ENCODE measurements at regions of chrX and their contacts with region 1.

Region 1: GRCh38 chrX:130060122-130061069 is 49.9 kb downstream of the ELF4 start:
- DNase-seq: peak in 1 of 2 donors; percentile 86
- H3K4me3 ChIP-seq: peak overlapping the region; percentile 48 to 65
- H3K27ac ChIP-seq: peak overlapping the region; percentile 68 to 77
- H3K4me1 ChIP-seq: peaks cover 0 to 2% of the 10 kb centered on the region in 2 donors
- H3K27me3 ChIP-seq: no peaks in the 10 kb centered on the region
- CTCF ChIP-seq: peak; percentile 84 to 89 (median 88)

Region 2: DNA sequence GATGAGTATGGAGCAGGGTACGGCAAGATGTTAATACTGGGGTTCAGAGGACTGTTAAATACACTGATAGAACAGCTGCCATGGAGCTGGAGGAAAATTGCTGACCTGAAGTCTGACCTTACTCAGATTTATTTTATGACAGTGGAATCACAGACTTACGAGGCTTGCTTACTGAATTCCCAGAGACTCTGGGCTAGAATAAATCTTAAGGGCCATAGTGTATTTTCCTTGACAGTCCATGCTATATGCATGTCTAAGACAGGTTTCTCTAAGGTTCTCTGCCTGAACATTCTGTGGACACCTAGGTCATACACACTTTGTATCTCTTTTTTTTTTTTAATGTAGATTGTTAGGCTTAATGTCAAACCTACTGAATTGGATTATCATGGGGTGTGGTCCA is 1375.0 kb before region 1 on chrX:
- intact Hi-C with region 1: no loop called
- DNase-seq: no peak
- H3K4me3 ChIP-seq: no peak overlapping the region
- H3K27ac ChIP-seq: no peak overlapping the region
- H3K4me1 ChIP-seq: no peaks in the 10 kb centered on the region
- H3K27me3 ChIP-seq: no peaks in the 10 kb centered on the region
- CTCF ChIP-seq: no peak

Region 3: GRCh38 chrX:129606918-129607317 is 453.5 kb before region 1 on chrX:
- intact Hi-C with region 1: loop called (anchors 1 kb)
- DNase-seq: peak in 1 of 2 donors; percentile 70
- H3K4me3 ChIP-seq: no peak overlapping the region
- H3K27ac ChIP-seq: no peak overlapping the region
- H3K4me1 ChIP-seq: no peaks in the 10 kb centered on the region
- H3K27me3 ChIP-seq: no peaks in the 10 kb centered on the region
- CTCF ChIP-seq: peak; percentile 75 to 80 (median 77)

Region 4: GRCh38 chrX:129843459-129844306 is 216.7 kb before region 1 on chrX and contains the start of gene ZDHHC9:
- intact Hi-C with region 1: loop called (anchors 5 kb)
- DNase-seq: peak; percentile 59 to 93
- H3K4me3 ChIP-seq: peak within 1 kb of the TSS; percentile 54 to 77
- H3K27ac ChIP-seq: peak within 1 kb of the TSS; percentile 68 to 77
- H3K4me1 ChIP-seq: no peaks in the 10 kb centered on the region
- H3K27me3 ChIP-seq: no peaks in the 10 kb centered on the region
- CTCF ChIP-seq: no peak
- total RNA-seq, gene ZDHHC9: 43.0 TPM

Region 5: DNA sequence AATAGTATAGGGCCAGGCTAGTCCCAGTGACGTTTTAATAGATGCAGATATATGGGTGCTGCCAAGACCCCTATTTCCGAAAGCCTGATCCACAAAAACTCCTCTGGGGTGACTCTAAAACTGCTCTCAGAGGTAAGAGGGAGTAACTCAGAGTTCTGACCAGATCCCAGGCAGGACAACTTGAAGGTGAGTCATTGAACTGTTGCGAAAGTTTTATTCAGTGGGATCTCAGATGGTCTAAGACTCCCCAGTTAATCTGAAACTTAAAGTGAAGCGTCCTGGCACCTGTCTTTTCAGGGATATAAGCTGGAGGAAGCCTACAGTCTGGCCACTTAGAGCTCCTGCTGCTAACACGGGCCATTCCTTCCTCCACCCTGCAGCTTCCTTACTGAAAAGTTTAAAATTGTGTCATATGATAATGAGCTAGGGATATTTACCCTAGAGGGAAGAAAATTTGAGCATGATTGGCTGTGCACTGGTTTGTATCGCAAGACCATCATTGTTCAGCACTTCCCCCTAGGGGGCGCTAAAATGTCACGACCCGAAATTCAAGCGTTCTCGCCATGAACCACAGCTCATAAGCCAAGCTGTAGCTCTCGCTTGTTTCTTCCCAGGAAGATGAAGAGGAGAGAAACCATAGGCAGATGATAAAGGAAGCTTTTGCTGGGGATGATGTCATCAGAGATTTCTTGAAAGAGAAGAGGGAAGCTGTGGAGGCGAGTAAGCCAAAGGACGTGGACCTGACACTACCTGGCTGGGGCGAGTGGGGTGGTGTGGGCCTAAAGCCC is 134.9 kb before region 1 on chrX:
- intact Hi-C with region 1: loop called (anchors 1 kb)
- DNase-seq: peak in 1 of 2 donors; percentile 79
- H3K4me3 ChIP-seq: no peak overlapping the region
- H3K27ac ChIP-seq: no peak overlapping the region
- H3K4me1 ChIP-seq: no peaks in the 10 kb centered on the region
- H3K27me3 ChIP-seq: no peaks in the 10 kb centered on the region
- CTCF ChIP-seq: peak; percentile 36 to 65 (median 53)

Region 6: DNA sequence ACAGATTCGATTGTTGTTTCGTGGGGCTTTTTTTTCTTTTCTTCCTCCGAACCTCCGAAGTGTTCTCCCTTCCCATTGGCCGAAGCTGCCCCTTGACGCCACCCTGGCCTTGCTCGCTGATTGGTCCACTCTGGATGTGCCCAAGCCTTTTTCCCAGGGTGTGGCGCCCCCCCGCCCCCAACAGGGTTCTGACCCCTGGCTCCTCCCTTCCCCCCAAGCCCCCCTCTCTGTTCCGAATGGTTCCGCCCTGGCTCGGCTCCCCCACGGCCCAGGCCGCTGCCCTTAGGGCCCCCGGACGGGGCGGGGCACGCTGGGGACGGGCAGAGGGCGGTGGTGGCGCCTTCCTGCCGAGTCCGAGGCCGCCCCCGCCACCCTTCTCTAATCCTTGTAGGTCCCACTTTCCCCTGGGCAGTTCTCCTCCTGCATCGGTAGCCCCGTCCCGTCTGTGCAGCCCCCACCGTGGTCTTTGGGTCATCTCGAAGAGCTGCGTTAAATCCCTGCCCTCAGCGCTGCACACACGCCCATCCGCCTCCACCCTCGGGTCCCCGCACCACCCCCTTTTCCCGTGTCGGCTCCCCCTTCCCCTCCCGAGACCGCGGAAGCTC is 128.9 kb before region 1 on chrX:
- intact Hi-C with region 1: loop called (anchors 1 kb)
- DNase-seq: peak; percentile 60 to 94
- H3K4me3 ChIP-seq: peak overlapping the region; percentile 43 to 76
- H3K27ac ChIP-seq: peak overlapping the region; percentile 83 to 86
- H3K4me1 ChIP-seq: no peaks in the 10 kb centered on the region
- H3K27me3 ChIP-seq: no peaks in the 10 kb centered on the region
- CTCF ChIP-seq: no peak

Region 7: DNA sequence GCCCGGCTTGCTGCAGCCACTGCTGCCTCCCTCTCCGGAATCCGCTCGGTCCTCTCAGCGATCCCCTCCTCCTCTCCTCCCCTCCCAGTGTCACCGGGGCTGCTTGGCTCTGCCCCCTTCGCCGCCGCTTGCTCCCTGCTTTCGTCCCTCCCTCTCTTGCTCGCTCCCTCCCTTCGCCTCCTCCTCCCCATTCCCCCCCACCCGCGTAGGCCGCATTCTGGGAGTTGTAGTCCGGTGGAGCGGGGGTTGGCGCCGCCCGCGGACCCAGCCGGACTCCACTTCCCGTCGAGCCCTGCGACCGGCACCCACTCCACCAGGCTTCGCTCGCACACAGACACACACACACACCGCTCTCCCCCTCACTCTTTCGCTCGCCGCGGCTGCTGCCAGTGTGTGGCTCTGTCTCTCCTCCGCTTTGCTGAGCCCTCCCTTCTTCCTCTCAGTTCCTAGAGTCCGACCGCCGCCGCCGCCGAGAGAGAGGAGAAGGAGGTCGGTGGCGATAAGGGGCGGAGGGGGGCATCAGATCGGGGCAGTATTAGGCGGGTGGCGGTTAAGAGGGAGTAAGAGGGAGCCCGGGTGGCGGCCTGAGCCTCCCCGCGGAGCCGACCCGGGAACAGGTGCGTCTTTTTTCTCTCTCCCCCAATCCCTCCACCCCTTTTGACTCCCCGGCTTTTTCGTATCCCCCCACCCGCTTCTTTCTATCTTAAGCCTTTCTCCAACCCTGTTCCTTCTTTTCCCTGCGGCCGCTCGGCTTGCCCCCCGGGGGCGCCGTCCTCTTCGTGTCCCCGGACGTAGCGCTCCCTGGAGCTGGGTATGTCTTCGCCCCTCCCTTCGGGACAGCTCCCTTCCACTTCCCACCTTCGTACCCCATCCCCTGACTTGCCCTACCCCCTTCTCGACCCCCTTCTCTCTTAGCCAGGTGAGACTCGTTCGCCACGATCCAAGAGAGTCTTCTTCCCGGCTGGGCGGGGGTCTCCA is 77.8 kb before region 1 on chrX and contains the start of gene BCORL1:
- intact Hi-C with region 1: loop called (anchors 2 kb)
- DNase-seq: peak; percentile 75 to 94
- H3K4me3 ChIP-seq: peak within 1 kb of the TSS in 1 of 2 donors; percentile 58
- H3K27ac ChIP-seq: no peak within 1 kb of the TSS
- H3K4me1 ChIP-seq: no peaks in the 10 kb centered on the region
- H3K27me3 ChIP-seq: no peaks in the 10 kb centered on the region
- CTCF ChIP-seq: no peak
- total RNA-seq, gene BCORL1: 10.3 TPM

Region 8: DNA sequence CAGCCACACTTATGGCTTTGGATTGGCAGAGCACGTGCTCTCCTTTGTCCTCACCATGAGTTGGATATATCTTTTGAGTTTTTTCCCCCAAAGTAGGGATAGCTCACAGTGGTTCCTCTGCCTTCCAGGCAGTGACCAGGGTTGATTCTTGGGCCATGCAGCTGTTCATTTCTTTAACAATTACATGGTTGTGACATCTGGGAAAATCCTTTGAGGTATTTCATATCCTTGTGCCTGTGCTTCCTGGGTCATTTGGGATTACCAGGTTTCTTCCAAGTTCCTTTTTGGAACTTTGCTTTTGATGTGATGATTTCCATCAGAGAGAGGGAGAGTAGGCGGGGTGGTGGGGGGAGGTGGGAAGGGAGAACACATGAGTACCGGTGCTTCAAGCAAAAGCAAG is 62.4 kb before region 1 on chrX:
- intact Hi-C with region 1: no loop called
- DNase-seq: no peak
- H3K4me3 ChIP-seq: no peak overlapping the region
- H3K27ac ChIP-seq: no peak overlapping the region
- H3K4me1 ChIP-seq: no peaks in the 10 kb centered on the region
- H3K27me3 ChIP-seq: no peaks in the 10 kb centered on the region
- CTCF ChIP-seq: no peak

Region 9: GRCh38 chrX:130024127-130024526 is 36.3 kb before region 1 on chrX:
- intact Hi-C with region 1: no loop called
- DNase-seq: peak; percentile 57 to 87
- H3K4me3 ChIP-seq: no peak overlapping the region
- H3K27ac ChIP-seq: no peak overlapping the region
- H3K4me1 ChIP-seq: no peaks in the 10 kb centered on the region
- H3K27me3 ChIP-seq: no peaks in the 10 kb centered on the region
- CTCF ChIP-seq: no peak

Region 10: DNA sequence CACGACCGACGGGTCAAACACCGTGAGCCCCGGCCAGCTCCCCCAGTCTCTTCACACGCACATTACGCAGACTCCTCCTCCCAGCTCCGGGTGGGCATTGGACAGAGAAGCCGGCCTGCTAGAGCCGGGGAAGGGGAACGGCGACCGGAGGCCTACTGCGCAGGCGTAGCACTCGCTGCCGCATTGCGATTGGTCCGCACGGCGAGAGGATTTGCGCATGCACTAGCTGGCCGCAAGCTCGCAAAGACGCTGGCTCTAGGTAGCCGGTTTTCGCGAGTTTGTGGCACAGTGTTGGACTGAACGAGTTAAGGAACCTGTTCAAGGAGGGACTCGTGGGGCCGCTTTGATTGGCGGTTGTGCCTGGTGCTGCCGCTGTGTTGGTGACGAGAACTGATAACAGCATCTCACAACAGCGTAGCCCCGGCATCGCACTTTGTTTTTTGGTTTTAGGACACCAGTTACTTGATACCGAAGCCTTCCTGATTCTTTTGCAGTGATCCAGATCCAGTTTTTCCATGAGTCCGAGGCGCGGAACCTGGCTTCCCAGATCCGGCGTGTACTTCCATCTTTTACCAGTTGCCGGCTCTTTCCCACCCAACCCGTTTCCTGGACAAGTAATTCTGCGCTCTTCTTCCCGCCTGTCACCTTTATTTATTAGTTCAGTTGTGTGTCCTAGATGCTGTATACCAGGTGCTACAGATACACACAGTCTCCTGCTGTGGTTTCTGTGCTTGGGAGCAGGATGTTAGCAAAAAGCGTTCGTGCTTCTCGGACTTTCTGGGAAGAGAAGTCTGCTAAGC is 105.5 kb after region 1 on chrX and contains the start of gene AIFM1:
- intact Hi-C with region 1: loop called (anchors 5 kb)
- DNase-seq: peak; percentile 70 to 94
- H3K4me3 ChIP-seq: peak within 1 kb of the TSS; percentile 49 to 76
- H3K27ac ChIP-seq: peak within 1 kb of the TSS; percentile 62 to 82
- H3K4me1 ChIP-seq: no peaks in the 10 kb centered on the region
- H3K27me3 ChIP-seq: no peaks in the 10 kb centered on the region
- CTCF ChIP-seq: no peak
- total RNA-seq, gene AIFM1: 0.75 TPM

Measured in ascending aorta (tissue), 2 donors.